CD4-positive, alpha-beta memory T cell (primary cell): ENCODE measurements at regions of chr3 and their contacts with region 1.

Region 1: DNA sequence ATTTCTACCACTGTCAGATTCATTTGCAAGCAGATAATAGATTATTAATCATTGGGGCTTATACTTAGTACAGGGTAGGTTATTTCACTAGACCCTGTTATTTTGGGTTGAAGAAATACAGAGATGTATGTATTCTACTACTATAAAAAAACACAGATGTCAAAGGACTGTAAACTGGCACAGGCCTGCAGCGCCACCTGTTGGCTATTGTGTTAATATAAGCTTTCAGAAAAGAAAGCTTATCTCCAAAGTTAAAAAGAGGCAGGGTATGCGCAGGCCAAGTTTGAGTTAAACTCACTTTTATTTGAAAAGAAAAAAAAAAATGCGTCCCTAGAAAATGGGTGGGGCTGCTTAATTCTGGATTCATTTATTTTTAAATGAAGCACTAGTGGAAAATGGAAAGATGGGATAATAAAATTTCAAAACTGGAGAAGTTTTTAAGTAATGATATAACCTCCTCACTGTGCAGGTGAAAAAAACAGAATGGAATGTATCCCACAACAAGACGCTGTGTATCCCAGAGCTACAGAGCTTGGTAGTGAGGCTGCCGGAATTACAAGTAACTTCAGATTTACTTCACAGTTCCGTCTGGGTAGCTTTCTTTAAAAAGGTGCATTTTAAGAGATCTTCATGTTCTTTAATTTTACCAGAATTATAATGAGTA is 407.2 kb upstream of the TGFBR2 start:
- DNase-seq: peak; percentile 41 to 44 (median 43)
- H3K4me3 ChIP-seq: no peak overlapping the region
- H3K4me3 Mint-ChIP-seq: no peak overlapping the region
- H3K27ac ChIP-seq: no peak overlapping the region
- H3K27ac Mint-ChIP-seq: no peak overlapping the region
- H3K4me1 ChIP-seq: no peaks in the 10 kb centered on the region
- H3K4me1 Mint-ChIP-seq: no peaks in the 10 kb centered on the region
- H3K27me3 ChIP-seq: no peaks in the 10 kb centered on the region
- H3K27me3 Mint-ChIP-seq: no peaks in the 10 kb centered on the region

Region 2: GRCh38 chr3:30012941-30013543 is 186.2 kb before region 1 on chr3:
- CTCF ChIA-PET with region 1: interaction called, 12 read pairs
- POLR2A ChIA-PET with region 1: no interaction called
- intact Hi-C with region 1: loop called (anchors 1 kb)
- DNase-seq: peak; percentile 11 to 33 (median 26)
- H3K4me3 ChIP-seq: no peak overlapping the region
- H3K4me3 Mint-ChIP-seq: no peak overlapping the region
- H3K27ac ChIP-seq: no peak overlapping the region
- H3K27ac Mint-ChIP-seq: no peak overlapping the region
- H3K4me1 ChIP-seq: no peaks in the 10 kb centered on the region
- H3K4me1 Mint-ChIP-seq: no peaks in the 10 kb centered on the region
- H3K27me3 ChIP-seq: no peaks in the 10 kb centered on the region
- H3K27me3 Mint-ChIP-seq: peaks cover 0 to 12% of the 10 kb centered on the region in 2 donors

Region 3: DNA sequence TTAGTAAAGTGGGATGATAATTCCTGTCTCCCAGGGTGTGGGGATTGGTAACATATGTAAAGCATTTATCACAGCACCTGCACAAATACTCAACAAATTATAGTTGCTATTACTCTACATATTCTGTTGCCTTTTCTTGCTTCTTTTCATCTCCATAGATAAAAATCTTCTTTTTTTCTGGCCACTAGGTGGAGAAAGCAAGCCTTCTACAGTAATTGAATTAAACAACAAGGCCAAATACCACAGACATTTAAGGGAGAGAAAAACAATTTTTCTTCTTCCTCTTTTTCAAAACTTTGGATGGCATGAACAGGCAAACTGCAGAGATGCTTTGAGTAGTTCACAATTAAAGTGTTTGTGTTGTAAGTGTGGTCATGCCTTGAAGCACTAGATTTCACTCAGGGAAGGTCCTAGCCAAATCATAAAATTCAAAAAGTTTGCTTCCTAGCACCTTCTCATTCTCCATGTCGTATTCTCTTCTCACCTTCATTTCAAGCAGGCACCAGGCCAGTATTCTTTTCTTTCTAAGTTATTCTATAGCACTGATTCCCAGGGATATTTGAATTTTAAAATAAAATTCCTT is 86.2 kb before region 1 on chr3:
- CTCF ChIA-PET with region 1: interaction called, 5 read pairs
- POLR2A ChIA-PET with region 1: no interaction called
- intact Hi-C with region 1: loop called (anchors 1 kb)
- DNase-seq: peak in 4 of 5 donors; percentile 29 to 37 (median 34)
- H3K4me3 ChIP-seq: no peak overlapping the region
- H3K4me3 Mint-ChIP-seq: no peak overlapping the region
- H3K27ac ChIP-seq: no peak overlapping the region
- H3K27ac Mint-ChIP-seq: no peak overlapping the region
- H3K4me1 ChIP-seq: no peaks in the 10 kb centered on the region
- H3K4me1 Mint-ChIP-seq: no peaks in the 10 kb centered on the region
- H3K27me3 ChIP-seq: no peaks in the 10 kb centered on the region
- H3K27me3 Mint-ChIP-seq: peaks cover 2 to 5% of the 10 kb centered on the region in 2 donors

Region 4: DNA sequence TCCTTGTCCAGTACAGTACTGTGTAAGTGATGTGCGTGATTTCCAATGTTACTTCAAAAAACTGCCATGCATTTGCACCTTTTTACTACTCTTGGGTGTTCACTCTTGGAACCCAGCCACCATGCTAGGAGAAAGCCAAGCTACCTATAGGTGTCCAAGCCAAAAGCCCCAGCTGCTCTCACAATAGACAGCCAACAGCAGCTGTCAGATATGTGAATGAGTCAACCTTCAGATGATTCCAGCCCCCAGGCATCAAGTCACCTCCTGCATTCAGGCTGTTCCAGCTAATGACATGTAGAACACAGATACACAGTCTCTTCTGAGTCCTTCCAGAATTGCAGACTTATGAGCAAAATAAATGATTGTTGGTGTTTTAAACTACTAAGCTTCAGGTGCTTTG is 10.5 kb before region 1 on chr3:
- CTCF ChIA-PET with region 1: interaction called, 26 read pairs
- POLR2A ChIA-PET with region 1: no interaction called
- intact Hi-C with region 1: no loop called
- DNase-seq: no peak
- H3K4me3 ChIP-seq: no peak overlapping the region
- H3K4me3 Mint-ChIP-seq: no peak overlapping the region
- H3K27ac ChIP-seq: no peak overlapping the region
- H3K27ac Mint-ChIP-seq: no peak overlapping the region
- H3K4me1 ChIP-seq: no peaks in the 10 kb centered on the region
- H3K4me1 Mint-ChIP-seq: no peaks in the 10 kb centered on the region
- H3K27me3 ChIP-seq: no peaks in the 10 kb centered on the region
- H3K27me3 Mint-ChIP-seq: peaks cover 5 to 8% of the 10 kb centered on the region in 2 donors

Region 5: GRCh38 chr3:30252474-30252873 is 53.2 kb after region 1 on chr3:
- CTCF ChIA-PET with region 1: interaction called, 11 read pairs
- POLR2A ChIA-PET with region 1: no interaction called
- intact Hi-C with region 1: no loop called
- DNase-seq: no peak
- H3K4me3 ChIP-seq: no peak overlapping the region
- H3K4me3 Mint-ChIP-seq: no peak overlapping the region
- H3K27ac ChIP-seq: no peak overlapping the region
- H3K27ac Mint-ChIP-seq: no peak overlapping the region
- H3K4me1 ChIP-seq: no peaks in the 10 kb centered on the region
- H3K4me1 Mint-ChIP-seq: peaks cover 0 to 5% (median 2%) of the 10 kb centered on the region in 4 donors
- H3K27me3 ChIP-seq: no peaks in the 10 kb centered on the region
- H3K27me3 Mint-ChIP-seq: no peaks in the 10 kb centered on the region

Region 6: GRCh38 chr3:30353711-30354467 is 154.7 kb after region 1 on chr3:
- CTCF ChIA-PET with region 1: interaction called, 12 read pairs
- POLR2A ChIA-PET with region 1: no interaction called
- intact Hi-C with region 1: no loop called
- DNase-seq: peak; percentile 82 to 91 (median 86)
- H3K4me3 ChIP-seq: peak overlapping the region in 1 of 2 donors; percentile 33
- H3K4me3 Mint-ChIP-seq: peak overlapping the region; percentile 13 to 81 (median 64)
- H3K27ac ChIP-seq: no peak overlapping the region
- H3K27ac Mint-ChIP-seq: peak overlapping the region; percentile 29 to 79 (median 69)
- H3K4me1 ChIP-seq: peaks cover 67% of the 10 kb centered on the region
- H3K4me1 Mint-ChIP-seq: peaks cover 50 to 79% (median 63%) of the 10 kb centered on the region in 4 donors
- H3K27me3 ChIP-seq: no peaks in the 10 kb centered on the region
- H3K27me3 Mint-ChIP-seq: peaks cover under 1 to 5% of the 10 kb centered on the region in 2 donors

Region 7: GRCh38 chr3:30751610-30752299 is 552.5 kb after region 1 on chr3:
- CTCF ChIA-PET with region 1: interaction called, 9 read pairs
- POLR2A ChIA-PET with region 1: no interaction called
- intact Hi-C with region 1: loop called (anchors 1 kb)
- DNase-seq: peak in 4 of 5 donors; percentile 29 to 33 (median 30)
- H3K4me3 ChIP-seq: no peak overlapping the region
- H3K4me3 Mint-ChIP-seq: no peak overlapping the region
- H3K27ac ChIP-seq: no peak overlapping the region
- H3K27ac Mint-ChIP-seq: no peak overlapping the region
- H3K4me1 ChIP-seq: no peaks in the 10 kb centered on the region
- H3K4me1 Mint-ChIP-seq: peaks cover 0 to 1% (median 0%) of the 10 kb centered on the region in 4 donors
- H3K27me3 ChIP-seq: no peaks in the 10 kb centered on the region
- H3K27me3 Mint-ChIP-seq: peaks cover 7 to 8% of the 10 kb centered on the region in 2 donors